Heart right ventricle (tissue), 16 donors: ENCODE measurements at regions of chr15 and their contacts with region 1.

Region 1: GRCh38 chr15:64731012-64731806 is 44.2 kb downstream of the RBPMS2 start:
- DNase-seq: peak; percentile 84 to 85
- ATAC-seq: peak; percentile 56 to 88 (median 72)
- H3K4me3 ChIP-seq: no peak overlapping the region
- H3K27ac ChIP-seq: no peak overlapping the region
- H3K4me1 ChIP-seq: peaks cover 0 to 15% (median 4%) of the 10 kb centered on the region in 9 donors
- H3K27me3 ChIP-seq: no peaks in the 10 kb centered on the region
- CTCF ChIP-seq: peak; percentile 80 to 98 (median 91)

Region 2: GRCh38 chr15:64536244-64536836 is 194.9 kb before region 1 on chr15:
- intact Hi-C with region 1: no loop called
- DNase-seq: no peak
- ATAC-seq: peak in 2 of 8 donors; percentile 18 to 19
- H3K4me3 ChIP-seq: no peak overlapping the region
- H3K27ac ChIP-seq: no peak overlapping the region
- H3K4me1 ChIP-seq: peaks cover 0 to 32% (median 10%) of the 10 kb centered on the region in 9 donors
- H3K27me3 ChIP-seq: no peaks in the 10 kb centered on the region
- CTCF ChIP-seq: no peak

Region 3: GRCh38 chr15:64687688-64688087 is 43.5 kb before region 1 on chr15:
- intact Hi-C with region 1: loop called (anchors 1 to 2 kb)
- DNase-seq: no peak
- ATAC-seq: peak in 5 of 8 donors; percentile 4 to 24 (median 15)
- H3K4me3 ChIP-seq: no peak overlapping the region
- H3K27ac ChIP-seq: peak overlapping the region; percentile 7 to 70 (median 50)
- H3K4me1 ChIP-seq: peaks cover 31 to 88% (median 47%) of the 10 kb centered on the region in 9 donors
- H3K27me3 ChIP-seq: no peaks in the 10 kb centered on the region
- CTCF ChIP-seq: no peak

Region 4: GRCh38 chr15:64775551-64776401 is 44.6 kb after region 1 on chr15 and contains the start of gene RBPMS2:
- intact Hi-C with region 1: no loop called
- DNase-seq: peak; percentile 39 to 68
- ATAC-seq: peak; percentile 52 to 82 (median 66)
- H3K4me3 ChIP-seq: peak within 1 kb of the TSS; percentile 44 to 92 (median 67)
- H3K27ac ChIP-seq: peak within 1 kb of the TSS; percentile 81 to 96 (median 94)
- H3K4me1 ChIP-seq: peaks cover 0 to 44% (median 18%) of the 10 kb centered on the region in 9 donors
- H3K27me3 ChIP-seq: peaks cover 0 to 47% (median 0%) of the 10 kb centered on the region in 7 donors
- CTCF ChIP-seq: no peak
- total RNA-seq, gene RBPMS2: 177 to 296 (median 213) TPM

Region 5: GRCh38 chr15:64809649-64810496 is 78.7 kb after region 1 on chr15:
- intact Hi-C with region 1: loop called (anchors 1 to 5 kb)
- DNase-seq: peak; percentile 85 to 89
- ATAC-seq: peak; percentile 68 to 90 (median 86)
- H3K4me3 ChIP-seq: no peak overlapping the region
- H3K27ac ChIP-seq: no peak overlapping the region
- H3K4me1 ChIP-seq: peaks cover 0 to 18% (median 5%) of the 10 kb centered on the region in 9 donors
- H3K27me3 ChIP-seq: peaks cover 0 to 5% (median 0%) of the 10 kb centered on the region in 7 donors
- CTCF ChIP-seq: peak; percentile 80 to 94 (median 92)

Region 6: GRCh38 chr15:64911311-64912191 is 180.3 kb after region 1 on chr15 and contains the start of gene ANKDD1A:
- intact Hi-C with region 1: loop called in 8 of 10 experiments (anchors 5 to 10 kb)
- DNase-seq: peak; percentile 60 to 75
- ATAC-seq: peak; percentile 85 to 95 (median 90)
- H3K4me3 ChIP-seq: peak within 1 kb of the TSS; percentile 22 to 72 (median 60)
- H3K27ac ChIP-seq: peak within 1 kb of the TSS in 5 of 10 donors; percentile 23 to 54 (median 44)
- H3K4me1 ChIP-seq: peaks cover 0 to 20% (median 14%) of the 10 kb centered on the region in 9 donors
- H3K27me3 ChIP-seq: peaks cover 0 to 20% (median 0%) of the 10 kb centered on the region in 7 donors
- CTCF ChIP-seq: no peak
- total RNA-seq, gene ANKDD1A: 0.70 to 1.9 (median 1.3) TPM

Region 7: DNA sequence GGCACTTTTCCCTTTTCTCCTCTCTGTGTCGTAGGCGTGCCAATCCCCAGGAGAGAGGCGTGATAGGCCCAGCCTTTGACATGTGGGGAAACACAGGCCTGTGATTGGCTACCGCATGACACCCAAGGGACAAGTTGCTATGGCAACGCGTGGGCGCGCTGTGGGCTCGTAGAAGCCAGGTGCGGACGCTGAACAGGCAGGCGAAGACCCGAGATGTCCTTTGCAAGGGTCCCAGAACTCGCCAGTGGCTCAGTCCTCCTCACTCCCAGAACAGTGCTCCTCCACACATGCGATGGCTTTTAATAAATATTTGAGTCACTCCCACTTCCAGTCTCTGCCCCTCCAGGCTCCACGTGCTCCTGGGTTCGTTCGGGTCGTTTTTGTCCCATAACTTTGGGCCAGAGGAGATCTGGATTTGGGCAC is 318.2 kb after region 1 on chr15:
- intact Hi-C with region 1: no loop called
- DNase-seq: peak; percentile 88 to 95
- ATAC-seq: peak; percentile 84 to 95 (median 91)
- H3K4me3 ChIP-seq: peak overlapping the region in 9 of 10 donors; percentile 13 to 50 (median 43)
- H3K27ac ChIP-seq: no peak overlapping the region
- H3K4me1 ChIP-seq: peaks cover 4 to 36% (median 24%) of the 10 kb centered on the region in 9 donors
- H3K27me3 ChIP-seq: no peaks in the 10 kb centered on the region
- CTCF ChIP-seq: no peak